Activated B cell treated with CpG ODN at 0.5 μM for 24 hours (primary cell): ENCODE measurements at regions of chr2 and their contacts with region 1.

Region 1: GRCh38 chr2:9813312-9814133 is 29.8 kb upstream of the TAF1B start:
- DNase-seq: peak; percentile 59
- ATAC-seq: peak; percentile 89
- H3K4me3 Mint-ChIP-seq: no peak overlapping the region
- H3K27ac Mint-ChIP-seq: no peak overlapping the region
- H3K4me1 Mint-ChIP-seq: peaks cover 9% of the 10 kb centered on the region
- H3K27me3 Mint-ChIP-seq: peaks cover 4% of the 10 kb centered on the region
- CTCF ChIP-seq: peak; percentile 95

Region 2: DNA sequence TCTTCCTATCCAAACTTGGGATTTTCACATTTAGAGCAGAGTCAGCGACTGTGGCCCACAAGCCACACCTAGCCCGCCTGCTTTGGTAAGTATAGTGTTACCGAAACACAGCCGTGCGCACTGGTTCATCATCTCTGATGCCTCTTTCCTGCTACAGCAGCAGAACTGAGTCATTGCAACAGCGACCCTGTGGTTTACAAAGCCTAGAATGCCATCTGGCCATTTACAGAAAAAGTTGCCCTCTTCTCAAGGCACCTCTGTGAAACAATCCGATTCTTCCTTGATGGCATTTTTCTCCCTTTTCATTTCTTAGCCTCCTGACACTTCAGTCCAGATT is 349.9 kb before region 1 on chr2:
- CTCF ChIA-PET with region 1: no interaction called
- POLR2A ChIA-PET with region 1: no interaction called
- intact Hi-C with region 1: no loop called
- DNase-seq: no peak
- ATAC-seq: no peak
- H3K4me3 Mint-ChIP-seq: no peak overlapping the region
- H3K27ac Mint-ChIP-seq: no peak overlapping the region
- H3K4me1 Mint-ChIP-seq: no peaks in the 10 kb centered on the region
- H3K27me3 Mint-ChIP-seq: no peaks in the 10 kb centered on the region
- CTCF ChIP-seq: no peak

Region 3: GRCh38 chr2:9914384-9915065 is 101.0 kb after region 1 on chr2:
- CTCF ChIA-PET with region 1: no interaction called
- POLR2A ChIA-PET with region 1: no interaction called
- intact Hi-C with region 1: loop called (anchors 1 kb)
- DNase-seq: no peak
- ATAC-seq: peak; percentile 82
- H3K4me3 Mint-ChIP-seq: no peak overlapping the region
- H3K27ac Mint-ChIP-seq: no peak overlapping the region
- H3K4me1 Mint-ChIP-seq: no peaks in the 10 kb centered on the region
- H3K27me3 Mint-ChIP-seq: no peaks in the 10 kb centered on the region
- CTCF ChIP-seq: no peak